Heart right ventricle (tissue), 16 donors: ENCODE measurements at regions of chr1 and their contacts with region 1.

Region 1: DNA sequence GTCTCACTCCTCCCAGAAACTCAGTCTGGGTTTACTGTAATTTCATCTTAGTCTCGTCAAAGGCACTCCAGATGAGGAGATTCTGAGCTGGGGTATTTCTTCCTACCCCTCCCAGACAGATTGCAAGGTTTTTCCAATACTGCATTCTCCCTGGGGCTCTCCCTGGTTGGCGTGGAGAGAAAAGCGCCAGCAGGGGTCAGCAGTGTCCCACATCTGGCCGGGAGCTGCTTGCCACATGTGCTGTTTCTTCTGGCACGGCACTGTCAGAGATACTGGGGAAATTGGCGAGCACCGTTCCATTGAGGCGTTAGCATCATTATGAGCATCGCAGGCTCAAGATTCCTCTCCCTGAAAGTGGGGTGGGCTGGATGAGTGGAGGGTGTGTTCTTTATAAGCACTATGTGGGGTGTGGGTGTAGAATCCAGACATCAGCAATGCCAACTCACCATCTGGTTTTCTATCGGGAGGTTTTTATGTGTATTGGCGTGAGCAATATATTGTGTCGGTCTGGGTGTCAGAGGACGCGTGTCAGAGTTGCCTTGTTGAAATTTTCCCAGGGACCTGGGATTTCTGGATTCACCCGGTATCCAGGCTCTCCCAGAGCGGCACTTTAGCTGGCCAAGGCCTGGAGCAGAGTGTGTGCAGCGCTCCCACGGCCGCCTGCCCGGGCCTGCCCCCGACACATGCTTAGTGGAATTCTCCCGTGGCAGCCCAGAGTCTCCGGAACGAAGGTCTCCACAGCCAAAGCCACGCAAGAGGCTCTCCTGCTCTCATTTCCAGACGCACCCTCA is 8.0 kb upstream of the NAV1 start:
- DNase-seq: peak; percentile 86 to 90
- ATAC-seq: peak; percentile 86 to 92 (median 89)
- H3K4me3 ChIP-seq: no peak overlapping the region
- H3K27ac ChIP-seq: peak overlapping the region; percentile 4 to 92 (median 73)
- H3K4me1 ChIP-seq: peaks cover 11 to 50% (median 35%) of the 10 kb centered on the region in 9 donors
- H3K27me3 ChIP-seq: no peaks in the 10 kb centered on the region
- CTCF ChIP-seq: peak; percentile 74 to 94 (median 88)

Region 2: GRCh38 chr1:200896531-200897196 is 634.3 kb before region 1 on chr1:
- intact Hi-C with region 1: no loop called
- DNase-seq: no peak
- ATAC-seq: no peak
- H3K4me3 ChIP-seq: no peak overlapping the region
- H3K27ac ChIP-seq: no peak overlapping the region
- H3K4me1 ChIP-seq: peaks cover 0 to 9% (median 3%) of the 10 kb centered on the region in 9 donors
- H3K27me3 ChIP-seq: peaks cover 0 to 25% (median 16%) of the 10 kb centered on the region in 7 donors
- CTCF ChIP-seq: no peak

Region 3: DNA sequence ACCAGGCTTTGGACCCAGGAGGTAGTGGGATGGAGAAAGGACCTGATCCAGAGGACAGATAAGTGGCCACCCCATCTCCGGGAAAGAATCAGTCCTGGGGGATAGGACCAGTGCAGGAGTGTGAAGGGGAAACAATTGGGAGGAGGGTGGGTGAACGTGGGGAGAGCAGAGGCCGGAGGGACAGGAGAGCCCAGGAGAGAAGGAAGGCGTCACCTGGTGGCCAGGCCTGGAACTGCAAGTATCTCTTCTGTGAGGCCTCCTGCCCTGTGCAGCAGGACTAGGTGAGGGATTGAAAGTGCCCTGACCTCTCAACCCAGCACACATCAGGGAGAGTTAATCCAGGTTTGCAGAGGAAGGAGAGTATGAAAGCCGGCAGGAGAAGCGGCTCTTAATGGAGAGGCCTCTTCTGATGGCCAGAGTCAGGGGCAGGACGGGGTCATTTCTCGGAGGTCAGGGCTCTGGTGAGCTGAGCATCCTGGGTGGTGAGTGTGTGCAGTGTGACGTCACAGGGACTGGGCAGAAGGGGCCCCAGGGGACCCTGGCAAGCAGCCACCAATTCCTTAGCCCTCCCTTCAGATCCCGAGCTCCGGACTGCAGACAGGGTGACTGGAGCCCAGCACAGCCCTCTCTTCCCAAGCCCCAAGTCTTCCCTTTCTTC is 122.6 kb before region 1 on chr1:
- intact Hi-C with region 1: no loop called
- DNase-seq: peak; percentile 80 to 82
- ATAC-seq: peak; percentile 73 to 90 (median 86)
- H3K4me3 ChIP-seq: no peak overlapping the region
- H3K27ac ChIP-seq: no peak overlapping the region
- H3K4me1 ChIP-seq: peaks cover 0 to 23% (median 3%) of the 10 kb centered on the region in 9 donors
- H3K27me3 ChIP-seq: no peaks in the 10 kb centered on the region
- CTCF ChIP-seq: peak; percentile 89 to 97 (median 94)

Region 4: DNA sequence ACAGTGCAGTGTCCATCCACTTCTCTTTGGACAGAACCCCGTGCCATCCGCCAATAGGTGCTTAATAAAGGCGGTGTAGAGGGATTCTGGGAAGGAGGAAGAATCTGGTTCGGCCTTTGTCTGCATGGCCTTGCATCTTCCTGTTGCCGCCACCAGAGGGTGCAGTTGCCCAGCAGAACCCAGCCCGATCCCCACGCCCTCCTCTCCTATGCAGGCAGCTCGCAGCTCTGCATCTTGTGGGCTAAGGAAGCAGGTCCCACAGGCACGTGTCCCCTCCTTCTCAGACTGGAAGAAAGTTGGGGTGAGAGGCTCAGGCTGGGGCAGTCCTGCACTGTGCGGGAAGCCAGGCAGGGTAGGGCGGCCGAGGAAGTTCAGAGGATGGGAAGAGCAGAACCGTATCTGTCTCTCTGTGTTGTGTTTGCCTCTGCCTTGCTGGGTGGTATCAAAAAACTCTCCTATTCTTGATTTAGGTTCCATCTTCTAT is 28.8 kb after region 1 on chr1:
- intact Hi-C with region 1: loop called in 1 of 10 experiments (anchors 2 kb)
- DNase-seq: peak; percentile 80 to 83
- ATAC-seq: peak; percentile 79 to 84 (median 82)
- H3K4me3 ChIP-seq: no peak overlapping the region
- H3K27ac ChIP-seq: peak overlapping the region in 6 of 10 donors; percentile 5 to 87 (median 46)
- H3K4me1 ChIP-seq: peaks cover 9 to 100% (median 84%) of the 10 kb centered on the region in 9 donors
- H3K27me3 ChIP-seq: no peaks in the 10 kb centered on the region
- CTCF ChIP-seq: peak; percentile 81 to 96 (median 93)

Region 5: GRCh38 chr1:201565024-201565730 is 34.2 kb after region 1 on chr1:
- intact Hi-C with region 1: loop called in 1 of 10 experiments (anchors 5 kb)
- DNase-seq: peak in 1 of 2 donors; percentile 36
- ATAC-seq: peak in 3 of 8 donors; percentile 13 to 66 (median 26)
- H3K4me3 ChIP-seq: no peak overlapping the region
- H3K27ac ChIP-seq: peak overlapping the region in 6 of 10 donors; percentile 38 to 67 (median 49)
- H3K4me1 ChIP-seq: peaks cover 13 to 100% (median 75%) of the 10 kb centered on the region in 9 donors
- H3K27me3 ChIP-seq: no peaks in the 10 kb centered on the region
- CTCF ChIP-seq: no peak

Region 6: DNA sequence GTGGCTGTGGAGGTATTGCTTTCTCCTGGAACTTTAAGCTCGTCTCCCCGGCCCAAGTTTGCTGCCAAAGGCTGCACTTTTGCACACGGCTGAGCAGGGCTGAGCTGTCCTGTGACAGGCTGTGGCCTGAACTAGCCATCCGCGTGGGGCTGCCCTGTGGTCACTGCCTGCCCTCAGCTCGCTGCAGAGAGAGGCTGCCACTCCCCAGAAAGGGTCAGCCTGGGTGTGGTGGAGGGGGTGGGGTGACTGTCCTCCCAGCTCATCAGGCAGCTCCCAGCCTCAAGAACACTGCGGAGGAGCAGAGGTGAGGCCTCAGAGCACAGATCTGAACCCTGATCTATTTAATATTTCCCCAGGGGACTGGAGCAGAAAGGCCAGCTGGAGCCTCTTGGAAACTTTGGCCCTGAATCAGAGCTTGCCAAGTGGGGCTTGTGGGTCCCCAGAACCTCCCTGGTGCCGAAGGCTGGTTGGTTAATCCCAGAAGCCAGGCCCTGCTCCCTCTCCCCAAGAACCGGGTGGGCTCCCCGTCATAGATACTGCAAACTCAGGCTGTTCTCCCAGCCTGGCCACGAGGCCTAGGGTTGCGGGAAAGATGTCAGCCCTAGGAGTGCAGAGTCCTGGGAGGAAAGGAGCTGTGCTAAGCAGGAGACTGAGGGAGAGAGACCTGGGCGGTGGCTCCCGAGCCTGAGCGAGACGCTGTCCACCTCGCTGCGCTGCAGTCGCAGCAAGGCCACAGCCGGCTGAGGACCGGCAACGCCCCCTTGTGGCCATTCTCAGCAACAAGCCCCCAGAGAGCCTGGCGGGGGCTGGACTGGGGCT is 172.9 kb after region 1 on chr1:
- intact Hi-C with region 1: loop called in 4 of 10 experiments (anchors 1 to 2 kb)
- DNase-seq: peak; percentile 85 to 90
- ATAC-seq: peak; percentile 89 to 94 (median 90)
- H3K4me3 ChIP-seq: no peak overlapping the region
- H3K27ac ChIP-seq: peak overlapping the region in 9 of 10 donors; percentile 20 to 81 (median 54)
- H3K4me1 ChIP-seq: peaks cover 13 to 46% (median 26%) of the 10 kb centered on the region in 9 donors
- H3K27me3 ChIP-seq: no peaks in the 10 kb centered on the region
- CTCF ChIP-seq: peak; percentile 93 to 99 (median 98)

Region 7: DNA sequence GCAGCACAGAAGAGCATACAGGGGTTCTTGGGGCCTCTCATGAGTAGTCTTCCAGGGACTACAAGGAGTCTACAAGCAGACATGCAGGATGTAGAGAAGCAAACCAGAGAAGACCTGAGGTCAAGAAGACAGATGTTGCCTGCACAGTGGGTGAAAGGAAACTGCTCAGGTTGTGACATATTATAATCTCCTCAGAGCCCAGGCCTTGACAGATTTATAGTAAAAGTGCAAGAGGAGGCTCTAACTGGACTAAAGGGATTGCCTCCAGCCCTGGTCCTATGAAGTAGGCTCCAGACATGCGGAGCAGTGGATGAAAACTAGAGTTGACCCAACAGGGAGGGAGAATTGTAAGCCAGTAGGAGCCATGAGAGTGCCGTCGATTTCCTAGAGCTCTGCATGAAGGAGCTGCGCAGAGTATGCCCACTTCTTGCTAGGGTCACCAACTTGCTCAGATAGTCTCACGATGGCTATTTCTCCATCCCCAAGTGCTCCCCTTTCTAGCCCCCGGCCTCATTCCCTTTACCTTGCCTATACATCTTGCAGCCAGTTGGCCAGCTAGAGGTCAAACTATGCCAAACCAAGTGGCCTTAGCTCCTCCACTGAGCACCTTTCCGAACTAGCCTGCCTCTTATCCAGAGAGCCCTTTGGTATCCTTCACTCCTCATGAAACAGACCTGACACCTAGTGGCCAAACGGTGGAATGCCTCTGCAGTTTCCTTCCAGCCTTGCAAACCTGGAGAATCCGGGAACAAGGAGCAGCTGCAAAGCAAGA is 261.8 kb after region 1 on chr1:
- intact Hi-C with region 1: loop called in 6 of 10 experiments (anchors 2 to 5 kb)
- DNase-seq: peak; percentile 56 to 86
- ATAC-seq: peak; percentile 79 to 87 (median 80)
- H3K4me3 ChIP-seq: no peak overlapping the region
- H3K27ac ChIP-seq: peak overlapping the region; percentile 53 to 94 (median 82)
- H3K4me1 ChIP-seq: peaks cover 41 to 74% (median 56%) of the 10 kb centered on the region in 9 donors
- H3K27me3 ChIP-seq: no peaks in the 10 kb centered on the region
- CTCF ChIP-seq: peak; percentile 93 to 97 (median 96)

Region 8: GRCh38 chr1:201877877-201878401 is 347.0 kb after region 1 on chr1:
- intact Hi-C with region 1: loop called in 1 of 10 experiments (anchors 10 kb)
- DNase-seq: peak in 1 of 2 donors; percentile 57
- ATAC-seq: peak; percentile 57 to 73 (median 66)
- H3K4me3 ChIP-seq: no peak overlapping the region
- H3K27ac ChIP-seq: peak overlapping the region in 8 of 10 donors; percentile 8 to 69 (median 47)
- H3K4me1 ChIP-seq: peaks cover 0 to 26% (median 14%) of the 10 kb centered on the region in 9 donors
- H3K27me3 ChIP-seq: no peaks in the 10 kb centered on the region
- CTCF ChIP-seq: peak; percentile 29 to 76 (median 67)

Region 9: DNA sequence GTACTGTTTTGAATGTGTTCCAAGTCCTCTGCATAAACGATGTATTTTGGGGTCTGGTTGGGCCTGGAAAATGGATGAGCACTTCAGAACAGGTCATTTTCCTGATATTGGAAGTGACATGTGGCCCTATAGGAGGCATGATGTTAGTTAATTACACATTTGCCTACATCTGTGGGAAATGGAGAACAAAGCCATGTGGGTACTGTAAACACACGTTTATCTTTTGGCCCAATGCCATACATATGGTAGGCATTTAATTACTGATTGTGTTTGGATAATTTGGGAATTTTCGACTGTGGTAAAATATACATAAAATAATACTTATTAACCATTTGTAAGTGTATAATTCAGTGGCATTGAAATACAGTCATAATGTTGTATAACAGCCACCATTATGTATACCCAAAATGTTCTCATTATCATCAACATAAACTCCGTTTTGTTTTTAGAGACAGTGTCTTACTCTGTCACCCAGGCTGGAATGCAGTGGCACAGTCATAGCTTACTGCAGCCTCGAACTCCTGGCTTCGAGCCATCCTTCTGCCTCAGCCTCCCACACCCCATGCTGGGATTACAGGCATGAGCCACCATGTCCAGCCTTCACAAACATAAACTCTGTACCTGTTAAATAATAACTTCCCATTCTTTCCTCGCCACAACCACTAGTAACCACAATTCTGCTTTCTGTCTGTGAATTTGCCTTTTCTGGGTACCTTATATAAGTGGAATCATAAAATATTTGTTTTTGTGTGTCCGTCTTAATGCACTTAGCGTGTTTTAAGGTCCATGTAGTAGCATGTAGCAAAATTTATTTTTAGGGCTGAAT is 439.6 kb after region 1 on chr1:
- intact Hi-C with region 1: loop called in 3 of 10 experiments (anchors 10 kb)
- DNase-seq: no peak
- ATAC-seq: peak in 1 of 8 donors; percentile 31
- H3K4me3 ChIP-seq: no peak overlapping the region
- H3K27ac ChIP-seq: peak overlapping the region in 1 of 10 donors; percentile 1
- H3K4me1 ChIP-seq: peaks cover 0 to 10% (median 3%) of the 10 kb centered on the region in 9 donors
- H3K27me3 ChIP-seq: no peaks in the 10 kb centered on the region
- CTCF ChIP-seq: no peak